CD4-positive, alpha-beta T cell (primary cell): ENCODE measurements at regions of chr16 and their contacts with region 1.

Region 1: GRCh38 chr16:89641458-89642119 is 15.9 kb downstream of the CHMP1A start:
- DNase-seq: no peak
- ATAC-seq: no peak
- H3K4me3 ChIP-seq: no peak overlapping the region
- H3K4me3 Mint-ChIP-seq: peak overlapping the region; percentile 78
- H3K27ac ChIP-seq: no peak overlapping the region
- H3K27ac Mint-ChIP-seq: peak overlapping the region; percentile 57
- H3K4me1 ChIP-seq: peaks cover 13% of the 10 kb centered on the region
- H3K4me1 Mint-ChIP-seq: peaks cover 11% of the 10 kb centered on the region
- H3K27me3 ChIP-seq: no peaks in the 10 kb centered on the region
- H3K27me3 Mint-ChIP-seq: no peaks in the 10 kb centered on the region
- CTCF ChIP-seq: peak; percentile 34

Region 2: GRCh38 chr16:89574681-89575246 is 66.8 kb before region 1 on chr16:
- CTCF ChIA-PET with region 1: no interaction called
- POLR2A ChIA-PET with region 1: no interaction called
- intact Hi-C with region 1: loop called in 1 of 2 experiments (anchors 1 kb)
- DNase-seq: peak; percentile 10 to 77 (median 49)
- ATAC-seq: peak; percentile 67
- H3K4me3 ChIP-seq: peak overlapping the region; percentile 39
- H3K4me3 Mint-ChIP-seq: peak overlapping the region; percentile 45
- H3K27ac ChIP-seq: no peak overlapping the region
- H3K27ac Mint-ChIP-seq: no peak overlapping the region
- H3K4me1 ChIP-seq: peaks cover 34% of the 10 kb centered on the region
- H3K4me1 Mint-ChIP-seq: peaks cover 16% of the 10 kb centered on the region
- H3K27me3 ChIP-seq: peaks cover 11 to 14% of the 10 kb centered on the region in 2 experiments
- H3K27me3 Mint-ChIP-seq: peaks cover 20% of the 10 kb centered on the region
- CTCF ChIP-seq: peak; percentile 34

Region 3: DNA sequence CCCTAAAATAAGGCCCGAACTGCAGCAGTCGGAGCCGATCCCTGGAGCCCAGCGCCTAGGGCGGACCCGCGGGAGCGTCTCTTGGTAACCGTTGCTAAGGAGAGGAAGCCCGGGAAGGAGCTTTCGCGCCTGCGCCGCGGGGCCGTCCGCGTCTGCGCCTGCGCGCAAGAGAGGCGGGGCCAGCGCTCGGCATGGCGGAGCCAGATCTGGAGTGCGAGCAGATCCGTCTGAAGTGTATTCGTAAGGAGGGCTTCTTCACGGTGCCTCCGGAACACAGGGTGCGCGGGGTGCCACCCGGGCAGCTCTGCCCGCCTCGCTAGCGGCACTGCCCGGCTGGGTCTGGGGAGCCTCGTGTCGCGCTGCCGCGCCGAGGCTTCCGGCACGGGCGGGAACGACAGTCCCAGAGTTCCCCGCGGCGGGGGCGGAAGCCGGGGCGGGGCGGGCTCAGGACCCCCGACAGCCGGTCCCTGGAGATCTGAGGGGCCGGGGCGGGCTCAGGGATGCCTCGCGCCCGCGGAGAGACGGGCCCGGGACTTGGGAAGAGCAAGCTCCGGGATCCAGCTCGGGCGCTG is 45.0 kb after region 1 on chr16 and contains the start of gene CDK10:
- CTCF ChIA-PET with region 1: no interaction called
- POLR2A ChIA-PET with region 1: no interaction called
- intact Hi-C with region 1: no loop called
- DNase-seq: peak; percentile 72 to 92 (median 86)
- ATAC-seq: peak; percentile 91
- H3K4me3 ChIP-seq: peak within 1 kb of the TSS; percentile 87
- H3K4me3 Mint-ChIP-seq: peak within 1 kb of the TSS; percentile 94
- H3K27ac ChIP-seq: peak within 1 kb of the TSS; percentile 73 to 79
- H3K27ac Mint-ChIP-seq: peak within 1 kb of the TSS; percentile 78
- H3K4me1 ChIP-seq: peaks cover 20% of the 10 kb centered on the region
- H3K4me1 Mint-ChIP-seq: peaks cover 5% of the 10 kb centered on the region
- H3K27me3 ChIP-seq: no peaks in the 10 kb centered on the region
- H3K27me3 Mint-ChIP-seq: no peaks in the 10 kb centered on the region
- CTCF ChIP-seq: no peak
- total RNA-seq, gene CDK10: 58.9 to 62.8 TPM